IMR-90 (cell line): ENCODE measurements at regions of chr12 and their contacts with region 1.

Region 1: GRCh38 chr12:101967506-101967905 is 90.1 kb downstream of the DRAM1 start:
- DNase-seq: no peak
- ATAC-seq: no peak
- H3K4me3 ChIP-seq: no peak overlapping the region
- H3K27ac ChIP-seq: no peak overlapping the region
- H3K4me1 ChIP-seq: no peaks in the 10 kb centered on the region
- H3K27me3 ChIP-seq: no peaks in the 10 kb centered on the region
- CTCF ChIP-seq: no peak
- POLR2A ChIP-seq: no peak
- RAD21 ChIP-seq: no peak

Region 2: GRCh38 chr12:101857043-101857558 is 110.4 kb before region 1 on chr12:
- CTCF ChIA-PET with region 1: no interaction called
- POLR2A ChIA-PET with region 1: no interaction called
- dilution Hi-C with region 1: no loop called
- in situ Hi-C with region 1: no loop called
- intact Hi-C with region 1: no loop called
- DNase-seq: peak; percentile 81
- ATAC-seq: peak; percentile 71
- H3K4me3 ChIP-seq: no peak overlapping the region
- H3K27ac ChIP-seq: no peak overlapping the region; the same call in 1 of the 2 replicates
- H3K4me1 ChIP-seq: peaks cover 20% of the 10 kb centered on the region
- H3K27me3 ChIP-seq: no peaks in the 10 kb centered on the region
- CTCF ChIP-seq: no peak
- POLR2A ChIP-seq: no peak
- RAD21 ChIP-seq: no peak

Region 3: GRCh38 chr12:101925361-101925760 is 42.1 kb before region 1 on chr12:
- CTCF ChIA-PET with region 1: no interaction called
- POLR2A ChIA-PET with region 1: no interaction called
- dilution Hi-C with region 1: no loop called
- in situ Hi-C with region 1: no loop called
- intact Hi-C with region 1: no loop called
- DNase-seq: peak; percentile 99
- ATAC-seq: peak; percentile 95
- H3K4me3 ChIP-seq: no peak overlapping the region
- H3K27ac ChIP-seq: peak overlapping the region; percentile 56; the same call in 1 of the 2 replicates
- H3K4me1 ChIP-seq: peaks cover 12% of the 10 kb centered on the region
- H3K27me3 ChIP-seq: no peaks in the 10 kb centered on the region
- CTCF ChIP-seq: no peak
- POLR2A ChIP-seq: no peak
- RAD21 ChIP-seq: no peak

Region 4: DNA sequence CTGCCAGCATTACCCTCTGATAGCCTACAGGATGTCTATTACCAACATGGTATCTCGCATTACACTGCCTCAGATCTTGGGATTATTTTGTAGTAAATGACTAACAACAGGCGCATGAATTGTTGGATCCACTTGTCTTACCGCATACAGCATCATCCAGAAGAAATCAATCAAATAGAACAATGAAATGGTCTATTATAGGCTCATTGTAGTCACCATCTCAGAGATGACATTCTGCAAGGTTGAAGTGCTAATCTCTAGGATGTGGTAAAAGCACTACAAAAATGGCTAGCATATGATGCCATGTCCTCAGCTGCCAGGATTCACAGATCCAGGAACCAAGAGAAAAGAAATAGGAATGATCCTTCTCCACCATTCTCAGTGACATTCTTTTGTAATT is 42.3 kb after region 1 on chr12:
- CTCF ChIA-PET with region 1: no interaction called
- POLR2A ChIA-PET with region 1: no interaction called
- dilution Hi-C with region 1: no loop called
- in situ Hi-C with region 1: no loop called
- intact Hi-C with region 1: loop called (anchors 5 kb)
- DNase-seq: no peak
- ATAC-seq: no peak
- H3K4me3 ChIP-seq: no peak overlapping the region
- H3K27ac ChIP-seq: no peak overlapping the region
- H3K4me1 ChIP-seq: no peaks in the 10 kb centered on the region
- H3K27me3 ChIP-seq: no peaks in the 10 kb centered on the region
- CTCF ChIP-seq: no peak
- POLR2A ChIP-seq: no peak
- RAD21 ChIP-seq: no peak